OCI-LY7 (cell line): ENCODE measurements at regions of chr11 and their contacts with region 1.

Region 1: GRCh38 chr11:18526521-18527296 is at the start of gene TSG101:
- DNase-seq: peak; percentile 92
- H3K4me3 ChIP-seq: peak within 1 kb of the TSS; percentile 86
- H3K27ac ChIP-seq: peak within 1 kb of the TSS; percentile 87
- H3K4me1 ChIP-seq: peaks cover 68% of the 10 kb centered on the region
- CTCF ChIP-seq: no peak
- total RNA-seq, gene TSG101: 56.9 and 96.8 TPM in 2 replicates

Region 2: DNA sequence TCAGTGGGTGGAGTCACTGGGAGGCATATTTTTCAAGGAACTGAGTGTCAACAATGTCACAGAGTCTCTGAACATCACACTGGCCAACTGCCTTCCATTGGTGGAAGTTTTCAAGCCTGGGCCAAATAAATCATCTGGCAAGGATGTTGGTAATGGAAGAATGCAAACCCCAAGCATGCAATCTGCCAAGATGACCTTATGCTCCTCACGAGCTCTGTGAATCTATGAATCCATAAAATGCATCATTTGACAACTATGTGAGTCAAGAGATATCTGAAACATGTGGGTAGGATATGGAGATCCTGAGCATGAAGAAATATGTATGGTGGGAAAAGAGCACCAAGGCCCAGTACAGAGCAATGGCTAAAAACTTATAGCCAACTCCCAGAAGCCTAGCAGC is 1634.7 kb before region 1 on chr11:
- CTCF ChIA-PET with region 1: no interaction called
- POLR2A ChIA-PET with region 1: no interaction called
- intact Hi-C with region 1: no loop called
- DNase-seq: no peak
- H3K4me3 ChIP-seq: no peak overlapping the region
- H3K27ac ChIP-seq: no peak overlapping the region
- H3K4me1 ChIP-seq: no peaks in the 10 kb centered on the region
- CTCF ChIP-seq: no peak

Region 3: GRCh38 chr11:18012863-18013781 is 513.6 kb before region 1 on chr11 and contains the start of gene SERGEF:
- CTCF ChIA-PET with region 1: no interaction called
- POLR2A ChIA-PET with region 1: no interaction called
- intact Hi-C with region 1: loop called (anchors 10 kb)
- DNase-seq: peak; percentile 95
- H3K4me3 ChIP-seq: peak within 1 kb of the TSS; percentile 76
- H3K27ac ChIP-seq: peak within 1 kb of the TSS; percentile 42
- H3K4me1 ChIP-seq: peaks cover 25% of the 10 kb centered on the region
- CTCF ChIP-seq: no peak
- total RNA-seq, gene SERGEF: 35.4 and 47.1 TPM in 2 replicates

Region 4: GRCh38 chr11:18229501-18229900 is 297.2 kb before region 1 on chr11:
- CTCF ChIA-PET with region 1: no interaction called
- POLR2A ChIA-PET with region 1: interaction called, 5 read pairs
- intact Hi-C with region 1: loop called (anchors 5 kb)
- DNase-seq: peak; percentile 96
- H3K4me3 ChIP-seq: peak overlapping the region; percentile 63
- H3K27ac ChIP-seq: peak overlapping the region; percentile 100
- H3K4me1 ChIP-seq: peaks cover 77% of the 10 kb centered on the region
- CTCF ChIP-seq: no peak

Region 5: GRCh38 chr11:18321980-18322711 is 204.6 kb before region 1 on chr11 and contains the starts of genes GTF2H1 and HPS5:
- CTCF ChIA-PET with region 1: no interaction called
- POLR2A ChIA-PET with region 1: interaction called, 8 read pairs
- intact Hi-C with region 1: loop called (anchors 2 kb)
- DNase-seq: peak; percentile 99
- H3K4me3 ChIP-seq: peak within 1 kb of the TSS; percentile 87
- H3K27ac ChIP-seq: peak within 1 kb of the TSS; percentile 79
- H3K4me1 ChIP-seq: peaks cover 40% of the 10 kb centered on the region
- CTCF ChIP-seq: no peak
- total RNA-seq, gene GTF2H1: 48.0 and 53.1 TPM in 2 replicates
- total RNA-seq, gene HPS5: 23.0 and 31.1 TPM in 2 replicates

Region 6: DNA sequence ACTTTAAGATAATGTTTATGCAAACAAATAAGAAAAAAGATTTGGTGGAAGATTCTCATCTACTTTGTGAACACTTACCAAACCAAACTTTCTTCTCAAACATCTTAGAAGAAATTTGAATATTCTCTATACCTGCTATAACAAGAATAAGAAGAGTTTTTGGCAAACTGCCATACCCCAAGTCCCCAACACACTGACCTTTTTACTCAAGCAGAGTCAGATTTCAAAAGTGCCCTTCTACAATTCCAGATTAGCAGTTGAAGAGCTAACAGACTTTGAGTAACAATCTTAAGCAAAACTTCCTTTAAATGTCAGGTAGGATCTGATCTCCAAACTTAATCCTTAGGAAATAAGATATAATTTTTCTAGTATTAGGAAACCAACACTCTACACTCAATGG is 33.8 kb before region 1 on chr11:
- CTCF ChIA-PET with region 1: no interaction called
- POLR2A ChIA-PET with region 1: interaction called, 5 read pairs
- intact Hi-C with region 1: loop called (anchors 1 kb)
- DNase-seq: no peak
- H3K4me3 ChIP-seq: no peak overlapping the region
- H3K27ac ChIP-seq: no peak overlapping the region
- H3K4me1 ChIP-seq: peaks cover 3% of the 10 kb centered on the region
- CTCF ChIP-seq: no peak

Region 7: GRCh38 chr11:19240420-19241259 is 713.9 kb after region 1 on chr11 and contains the start of gene E2F8:
- CTCF ChIA-PET with region 1: no interaction called
- POLR2A ChIA-PET with region 1: no interaction called
- intact Hi-C with region 1: loop called (anchors 5 kb)
- DNase-seq: peak; percentile 97
- H3K4me3 ChIP-seq: peak within 1 kb of the TSS; percentile 97
- H3K27ac ChIP-seq: peak within 1 kb of the TSS; percentile 90
- H3K4me1 ChIP-seq: peaks cover 35% of the 10 kb centered on the region
- CTCF ChIP-seq: no peak
- total RNA-seq, gene E2F8: 29.3 and 46.0 TPM in 2 replicates